ENCODE measurements at regions of chr17 and their contacts with region 1.

Region 1: DNA sequence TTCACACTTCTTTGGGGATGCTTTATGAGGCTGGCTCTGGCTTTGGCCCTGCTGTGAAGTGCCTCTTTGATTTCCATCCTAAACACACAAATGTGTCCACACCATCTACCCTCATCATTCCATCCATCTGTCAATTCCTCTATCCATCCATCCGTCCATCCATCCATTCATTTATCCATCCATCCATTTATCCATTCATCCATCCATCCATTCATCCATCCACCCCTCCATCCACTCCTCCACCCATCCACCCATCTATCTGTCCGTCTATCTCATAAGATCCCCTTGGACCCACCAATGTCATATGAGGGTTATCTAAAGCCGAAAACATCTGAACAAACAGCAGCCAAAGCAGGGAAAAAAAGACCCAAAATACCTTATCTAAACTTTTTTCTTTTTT is 101.4 kb downstream of the RGS9 start:
- DNase-seq: no peak

Region 2: GRCh38 chr17:65163990-65164495 is 74.6 kb before region 1 on chr17:
- intact Hi-C with region 1: no loop called
- DNase-seq: no peak

Region 3: DNA sequence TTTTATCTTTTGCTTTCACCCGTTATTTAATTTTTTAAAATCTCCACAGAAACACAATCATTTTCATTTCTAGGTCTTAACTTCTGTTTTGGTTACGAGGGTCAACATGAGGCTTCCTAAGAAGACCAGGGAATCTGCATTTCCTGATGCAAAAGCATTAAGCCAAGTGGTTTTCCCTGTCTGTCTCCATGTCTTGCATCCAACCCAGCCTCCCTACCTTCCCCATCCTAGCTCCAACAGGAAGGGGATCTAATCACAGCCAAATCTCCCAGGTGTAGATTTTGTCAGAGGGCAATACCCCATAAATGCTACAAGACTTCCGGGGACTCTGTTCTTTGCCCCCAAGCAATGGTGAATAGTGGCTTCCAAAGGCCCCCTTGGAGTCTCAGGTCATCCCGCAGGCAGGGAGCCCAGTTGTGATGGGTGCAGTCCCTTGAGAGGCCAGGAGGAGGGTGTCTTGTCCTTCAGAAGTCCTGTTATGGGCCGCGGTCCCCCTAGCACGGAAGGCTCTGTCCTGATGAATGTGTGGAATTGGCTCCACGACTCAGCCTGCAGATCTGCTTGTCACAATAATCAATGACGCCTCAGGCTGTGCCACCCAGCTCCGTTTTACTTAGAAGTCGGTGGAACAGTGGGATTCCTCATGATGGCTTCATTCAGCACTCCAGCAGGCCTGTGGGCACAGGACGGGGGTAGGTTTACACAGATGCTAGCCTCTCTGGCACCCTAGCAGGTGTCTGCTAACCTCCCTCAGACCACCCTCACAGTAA is 39.6 kb after region 1 on chr17:
- intact Hi-C with region 1: loop called in 1 of 2 experiments (anchors 1 kb)
- DNase-seq: no peak

Measured in posterior vena cava (tissue), 2 donors.